ENCODE measurements at regions of chr17 and their contacts with region 1.

Region 1: DNA sequence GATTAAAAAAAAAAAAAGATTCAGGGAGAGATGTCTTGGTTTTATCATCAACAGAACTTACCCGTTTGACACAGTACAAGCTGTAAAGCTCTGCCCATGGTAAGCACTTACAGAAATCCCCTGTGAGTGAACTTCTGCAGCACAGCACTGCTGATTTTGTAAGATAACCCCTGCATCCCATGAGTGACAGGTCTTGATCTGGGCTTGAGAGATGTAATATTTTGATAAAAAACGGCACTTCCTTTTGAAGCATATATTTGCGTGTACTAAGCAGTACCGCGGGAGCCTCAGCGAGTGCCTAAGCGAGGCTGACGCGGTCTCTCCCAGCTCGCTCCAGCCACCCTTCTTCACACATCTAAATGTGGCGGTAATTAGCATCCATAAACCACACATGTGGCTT is 50.5 kb downstream of the IKZF3 start:
- DNase-seq: peak; percentile 70
- H3K4me3 Mint-ChIP-seq: peak overlapping the region; percentile 57
- H3K27ac Mint-ChIP-seq: peak overlapping the region; percentile 52
- H3K4me1 Mint-ChIP-seq: peaks cover 61% of the 10 kb centered on the region
- H3K27me3 Mint-ChIP-seq: no peaks in the 10 kb centered on the region

Region 2: GRCh38 chr17:39716879-39717536 is 96.6 kb before region 1 on chr17:
- CTCF ChIA-PET with region 1: no interaction called
- intact Hi-C with region 1: no loop called
- DNase-seq: no peak
- H3K4me3 Mint-ChIP-seq: no peak overlapping the region
- H3K27ac Mint-ChIP-seq: no peak overlapping the region
- H3K4me1 Mint-ChIP-seq: no peaks in the 10 kb centered on the region
- H3K27me3 Mint-ChIP-seq: no peaks in the 10 kb centered on the region

Region 3: GRCh38 chr17:39777534-39778365 is 35.9 kb before region 1 on chr17:
- CTCF ChIA-PET with region 1: no interaction called
- intact Hi-C with region 1: no loop called
- DNase-seq: peak; percentile 34
- H3K4me3 Mint-ChIP-seq: peak overlapping the region; percentile 74
- H3K27ac Mint-ChIP-seq: peak overlapping the region; percentile 86
- H3K4me1 Mint-ChIP-seq: peaks cover 83% of the 10 kb centered on the region
- H3K27me3 Mint-ChIP-seq: no peaks in the 10 kb centered on the region

Region 4: GRCh38 chr17:39791111-39791992 is 22.3 kb before region 1 on chr17:
- CTCF ChIA-PET with region 1: interaction called, 8 read pairs
- intact Hi-C with region 1: loop called (anchors 1 kb)
- DNase-seq: peak; percentile 75
- H3K4me3 Mint-ChIP-seq: no peak overlapping the region
- H3K27ac Mint-ChIP-seq: peak overlapping the region; percentile 86
- H3K4me1 Mint-ChIP-seq: peaks cover 57% of the 10 kb centered on the region
- H3K27me3 Mint-ChIP-seq: no peaks in the 10 kb centered on the region

Region 5: DNA sequence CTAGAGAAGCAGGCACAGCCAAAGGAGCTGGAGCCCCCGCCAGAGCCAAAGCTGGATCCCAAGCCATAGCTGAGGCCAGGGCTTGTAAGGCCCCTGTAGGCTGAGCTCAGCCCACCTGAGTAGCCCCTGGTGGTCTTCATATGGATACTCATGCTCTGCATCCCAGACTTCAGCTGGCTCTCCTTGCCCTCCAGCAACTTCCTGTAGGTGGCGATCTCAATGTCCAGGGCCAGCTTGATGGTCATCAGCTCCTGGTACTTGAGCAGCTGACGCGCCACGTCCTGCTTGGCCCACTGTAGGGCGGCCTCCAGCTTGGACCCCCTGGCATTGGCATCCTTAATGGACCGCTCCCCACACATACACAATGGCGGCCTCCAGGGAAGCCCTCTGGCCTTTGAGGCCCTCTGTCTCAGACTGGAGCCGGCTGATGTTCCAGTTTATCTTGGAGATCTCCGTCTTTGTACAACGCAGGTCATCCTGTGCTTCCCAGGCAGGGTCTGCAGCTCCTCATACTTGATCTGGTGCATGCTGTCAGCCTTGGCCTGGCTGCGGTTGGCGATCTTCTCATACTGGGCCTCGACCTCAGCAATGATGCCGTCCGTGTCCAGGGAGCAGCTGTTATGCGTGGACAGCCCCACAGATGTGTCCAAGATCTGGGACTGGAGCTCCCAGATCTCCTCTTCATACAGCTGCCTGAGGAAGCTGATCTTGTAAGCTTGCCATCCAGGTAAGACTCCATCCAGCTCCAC is 21.6 kb after region 1 on chr17:
- CTCF ChIA-PET with region 1: no interaction called
- intact Hi-C with region 1: no loop called
- DNase-seq: no peak
- H3K4me3 Mint-ChIP-seq: no peak overlapping the region
- H3K27ac Mint-ChIP-seq: no peak overlapping the region
- H3K4me1 Mint-ChIP-seq: peaks cover 19% of the 10 kb centered on the region
- H3K27me3 Mint-ChIP-seq: no peaks in the 10 kb centered on the region